ENCODE measurements at regions of chr2 and their contacts with region 1.

Region 1: DNA sequence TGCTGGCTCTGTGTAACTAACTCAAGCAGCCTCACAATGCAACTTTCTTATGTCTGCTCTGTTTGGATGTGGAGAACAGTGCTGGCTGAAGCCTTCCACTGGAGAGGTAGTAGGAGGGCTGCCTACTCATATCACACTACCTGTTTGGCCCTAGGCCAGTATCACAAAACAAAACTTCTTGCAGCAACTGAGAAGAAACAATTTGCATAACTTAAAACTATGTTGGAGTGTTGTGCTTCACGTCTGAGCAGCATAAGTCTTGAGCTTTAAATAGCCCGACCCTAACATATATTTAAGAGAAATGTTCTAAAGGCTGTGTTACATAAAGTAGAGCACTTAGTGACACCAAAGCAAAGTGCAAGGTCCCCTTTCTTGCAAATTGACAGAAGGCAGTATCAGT is 204.9 kb upstream of the ACVR2A start:
- DNase-seq: no peak
- ATAC-seq: no peak
- H3K4me3 ChIP-seq: no peak overlapping the region
- H3K4me3 Mint-ChIP-seq: no peak overlapping the region
- H3K27ac ChIP-seq: no peak overlapping the region
- H3K27ac Mint-ChIP-seq: no peak overlapping the region
- H3K4me1 ChIP-seq: no peaks in the 10 kb centered on the region
- H3K4me1 Mint-ChIP-seq: peaks cover 0 to 6% (median 0%) of the 10 kb centered on the region in 3 donors
- H3K27me3 ChIP-seq: no peaks in the 10 kb centered on the region
- H3K27me3 Mint-ChIP-seq: peaks cover 0 to 3% of the 10 kb centered on the region in 2 donors

Region 2: DNA sequence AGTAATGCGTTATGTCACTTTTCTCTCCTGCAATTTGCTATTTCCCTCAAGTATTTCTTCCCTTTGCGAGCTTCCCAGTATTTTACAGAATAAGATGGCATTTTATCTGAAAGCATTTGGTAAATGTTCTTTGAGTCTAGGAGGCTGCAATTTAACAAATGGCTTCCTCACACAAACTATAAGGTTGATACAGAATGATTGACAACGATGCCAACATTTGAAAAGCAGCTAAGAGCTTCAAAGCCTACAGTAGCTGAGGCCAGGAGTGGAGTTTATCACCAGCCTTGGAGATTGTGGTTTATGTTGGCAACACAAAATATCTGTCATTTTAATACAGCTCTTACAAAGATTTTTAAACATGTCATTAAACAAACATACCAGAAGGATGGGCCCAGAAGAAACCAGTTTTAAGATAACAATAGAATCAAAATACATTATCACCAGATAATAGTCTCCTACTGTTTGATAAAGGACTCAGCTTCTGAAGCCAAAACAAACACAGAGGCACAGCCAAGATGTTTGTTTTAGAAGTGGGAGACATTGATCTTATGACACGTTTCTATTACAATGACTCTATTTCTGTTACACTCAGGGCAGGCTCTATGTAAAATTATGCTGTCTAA is 506.5 kb before region 1 on chr2:
- CTCF ChIA-PET with region 1: interaction called in 1 of 2 experiments, 12 read pairs
- POLR2A ChIA-PET with region 1: no interaction called
- DNase-seq: no peak
- ATAC-seq: no peak
- H3K4me3 ChIP-seq: no peak overlapping the region
- H3K4me3 Mint-ChIP-seq: no peak overlapping the region
- H3K27ac ChIP-seq: no peak overlapping the region
- H3K27ac Mint-ChIP-seq: no peak overlapping the region
- H3K4me1 ChIP-seq: no peaks in the 10 kb centered on the region
- H3K4me1 Mint-ChIP-seq: no peaks in the 10 kb centered on the region
- H3K27me3 ChIP-seq: no peaks in the 10 kb centered on the region
- H3K27me3 Mint-ChIP-seq: no peaks in the 10 kb centered on the region

Region 3: GRCh38 chr2:147547440-147547839 is 92.5 kb before region 1 on chr2:
- CTCF ChIA-PET with region 1: no interaction called
- POLR2A ChIA-PET with region 1: no interaction called
- DNase-seq: no peak
- ATAC-seq: no peak
- H3K4me3 ChIP-seq: no peak overlapping the region
- H3K4me3 Mint-ChIP-seq: no peak overlapping the region
- H3K27ac ChIP-seq: no peak overlapping the region
- H3K27ac Mint-ChIP-seq: no peak overlapping the region
- H3K4me1 ChIP-seq: no peaks in the 10 kb centered on the region
- H3K4me1 Mint-ChIP-seq: peaks cover 0 to 2% (median 0%) of the 10 kb centered on the region in 3 donors
- H3K27me3 ChIP-seq: no peaks in the 10 kb centered on the region
- H3K27me3 Mint-ChIP-seq: no peaks in the 10 kb centered on the region

Region 4: GRCh38 chr2:147607379-147607778 is 32.5 kb before region 1 on chr2:
- CTCF ChIA-PET with region 1: no interaction called
- POLR2A ChIA-PET with region 1: no interaction called
- DNase-seq: no peak
- ATAC-seq: no peak
- H3K4me3 ChIP-seq: no peak overlapping the region
- H3K4me3 Mint-ChIP-seq: no peak overlapping the region
- H3K27ac ChIP-seq: no peak overlapping the region
- H3K27ac Mint-ChIP-seq: no peak overlapping the region
- H3K4me1 ChIP-seq: no peaks in the 10 kb centered on the region
- H3K4me1 Mint-ChIP-seq: peaks cover 0 to 4% (median 0%) of the 10 kb centered on the region in 3 donors
- H3K27me3 ChIP-seq: no peaks in the 10 kb centered on the region
- H3K27me3 Mint-ChIP-seq: no peaks in the 10 kb centered on the region

Region 5: GRCh38 chr2:147696448-147696847 is 56.6 kb after region 1 on chr2:
- CTCF ChIA-PET with region 1: no interaction called
- POLR2A ChIA-PET with region 1: no interaction called
- DNase-seq: no peak
- ATAC-seq: no peak
- H3K4me3 ChIP-seq: no peak overlapping the region
- H3K4me3 Mint-ChIP-seq: no peak overlapping the region
- H3K27ac ChIP-seq: no peak overlapping the region
- H3K27ac Mint-ChIP-seq: no peak overlapping the region
- H3K4me1 ChIP-seq: no peaks in the 10 kb centered on the region
- H3K4me1 Mint-ChIP-seq: no peaks in the 10 kb centered on the region
- H3K27me3 ChIP-seq: no peaks in the 10 kb centered on the region
- H3K27me3 Mint-ChIP-seq: no peaks in the 10 kb centered on the region

Region 6: GRCh38 chr2:147773479-147773878 is 133.6 kb after region 1 on chr2:
- CTCF ChIA-PET with region 1: no interaction called
- POLR2A ChIA-PET with region 1: interaction called in 1 of 2 experiments, 13 read pairs
- DNase-seq: no peak
- ATAC-seq: no peak
- H3K4me3 ChIP-seq: no peak overlapping the region
- H3K4me3 Mint-ChIP-seq: no peak overlapping the region
- H3K27ac ChIP-seq: no peak overlapping the region
- H3K27ac Mint-ChIP-seq: no peak overlapping the region
- H3K4me1 ChIP-seq: no peaks in the 10 kb centered on the region
- H3K4me1 Mint-ChIP-seq: no peaks in the 10 kb centered on the region
- H3K27me3 ChIP-seq: no peaks in the 10 kb centered on the region
- H3K27me3 Mint-ChIP-seq: peaks cover 0 to 14% of the 10 kb centered on the region in 2 donors

Measured in T-cell (primary cell).